CD8-positive, alpha-beta T cell (primary cell): ENCODE measurements at regions of chr7 and their contacts with region 1.

Region 1: GRCh38 chr7:112550468-112551060 is 69.8 kb downstream of the LSMEM1 start:
- DNase-seq: peak in 4 of 9 experiments; percentile 6 to 72 (median 38)
- ATAC-seq: peak; percentile 49
- H3K4me3 ChIP-seq: no peak overlapping the region
- H3K4me3 Mint-ChIP-seq: no peak overlapping the region
- H3K27ac ChIP-seq: no peak overlapping the region
- H3K27ac Mint-ChIP-seq: no peak overlapping the region
- H3K4me1 ChIP-seq: no peaks in the 10 kb centered on the region
- H3K4me1 Mint-ChIP-seq: no peaks in the 10 kb centered on the region
- H3K27me3 ChIP-seq: no peaks in the 10 kb centered on the region
- H3K27me3 Mint-ChIP-seq: peaks cover 8% of the 10 kb centered on the region
- CTCF ChIP-seq: peak; percentile 94

Region 2: GRCh38 chr7:112869111-112869757 is 318.7 kb after region 1 on chr7:
- CTCF ChIA-PET with region 1: interaction called, 6 read pairs
- POLR2A ChIA-PET with region 1: no interaction called
- intact Hi-C with region 1: loop called (anchors 1 kb)
- DNase-seq: peak in 8 of 9 experiments; percentile 10 to 69 (median 47)
- ATAC-seq: peak; percentile 79
- H3K4me3 ChIP-seq: no peak overlapping the region
- H3K4me3 Mint-ChIP-seq: no peak overlapping the region
- H3K27ac ChIP-seq: no peak overlapping the region
- H3K27ac Mint-ChIP-seq: no peak overlapping the region
- H3K4me1 ChIP-seq: no peaks in the 10 kb centered on the region
- H3K4me1 Mint-ChIP-seq: peaks cover 47% of the 10 kb centered on the region
- H3K27me3 ChIP-seq: no peaks in the 10 kb centered on the region
- H3K27me3 Mint-ChIP-seq: no peaks in the 10 kb centered on the region
- CTCF ChIP-seq: peak; percentile 87

Region 3: DNA sequence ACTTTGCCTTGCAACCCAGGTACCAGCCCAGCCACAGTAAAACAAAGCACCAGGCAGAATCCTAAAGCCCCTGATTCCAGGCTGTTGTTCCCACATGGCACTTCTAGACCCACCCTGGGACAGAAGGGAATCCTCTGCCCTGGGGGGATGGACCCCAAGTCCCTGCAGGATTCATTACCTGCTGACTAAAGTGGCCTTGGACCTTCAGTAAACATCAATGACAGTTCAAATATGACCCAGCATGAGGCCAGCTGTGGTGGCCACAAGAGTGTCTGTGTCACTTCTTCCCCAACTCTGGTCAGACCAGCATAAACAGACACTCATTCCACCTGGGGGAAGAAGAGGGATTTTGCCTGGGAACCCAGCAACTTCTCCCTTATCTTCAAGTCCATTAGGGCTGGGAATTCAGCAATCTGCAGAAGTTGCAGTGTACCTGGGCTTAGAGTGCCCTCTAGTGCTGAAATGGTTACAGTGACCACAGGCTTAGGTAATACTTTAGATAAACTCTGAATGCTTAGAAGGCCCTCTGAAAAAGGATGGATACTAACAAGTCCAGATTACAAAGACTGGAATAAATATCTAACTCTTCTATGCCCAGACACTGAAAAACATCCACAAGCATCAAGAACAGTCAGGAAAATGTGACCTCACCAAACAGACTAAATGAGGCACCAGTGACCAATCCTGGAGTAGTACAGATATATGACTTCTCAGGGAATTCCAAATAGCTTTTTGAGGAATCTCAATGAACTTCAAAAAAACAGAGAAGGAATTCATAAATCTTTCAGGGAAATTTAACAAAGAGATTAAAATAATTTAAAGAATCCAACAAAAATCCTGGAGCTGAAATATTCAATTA is 348.1 kb after region 1 on chr7:
- CTCF ChIA-PET with region 1: interaction called, 10 read pairs
- POLR2A ChIA-PET with region 1: no interaction called
- intact Hi-C with region 1: loop called in 1 of 2 experiments (anchors 1 kb)
- DNase-seq: peak in 4 of 9 experiments; percentile 22 to 62 (median 39)
- ATAC-seq: peak; percentile 42
- H3K4me3 ChIP-seq: no peak overlapping the region
- H3K4me3 Mint-ChIP-seq: no peak overlapping the region
- H3K27ac ChIP-seq: no peak overlapping the region
- H3K27ac Mint-ChIP-seq: no peak overlapping the region
- H3K4me1 ChIP-seq: no peaks in the 10 kb centered on the region
- H3K4me1 Mint-ChIP-seq: peaks cover 12% of the 10 kb centered on the region
- H3K27me3 ChIP-seq: no peaks in the 10 kb centered on the region
- H3K27me3 Mint-ChIP-seq: no peaks in the 10 kb centered on the region
- CTCF ChIP-seq: peak; percentile 57

Region 4: GRCh38 chr7:113421696-113422330 is 871.2 kb after region 1 on chr7:
- CTCF ChIA-PET with region 1: interaction called, 30 read pairs
- POLR2A ChIA-PET with region 1: no interaction called
- intact Hi-C with region 1: loop called in 1 of 2 experiments (anchors 1 kb)
- DNase-seq: peak; percentile 37 to 81 (median 70)
- ATAC-seq: peak; percentile 94
- H3K4me3 ChIP-seq: no peak overlapping the region
- H3K4me3 Mint-ChIP-seq: no peak overlapping the region
- H3K27ac ChIP-seq: no peak overlapping the region
- H3K27ac Mint-ChIP-seq: no peak overlapping the region
- H3K4me1 ChIP-seq: no peaks in the 10 kb centered on the region
- H3K4me1 Mint-ChIP-seq: peaks cover 3% of the 10 kb centered on the region
- H3K27me3 ChIP-seq: no peaks in the 10 kb centered on the region
- H3K27me3 Mint-ChIP-seq: peaks cover under 1% of the 10 kb centered on the region
- CTCF ChIP-seq: peak; percentile 89

Region 5: DNA sequence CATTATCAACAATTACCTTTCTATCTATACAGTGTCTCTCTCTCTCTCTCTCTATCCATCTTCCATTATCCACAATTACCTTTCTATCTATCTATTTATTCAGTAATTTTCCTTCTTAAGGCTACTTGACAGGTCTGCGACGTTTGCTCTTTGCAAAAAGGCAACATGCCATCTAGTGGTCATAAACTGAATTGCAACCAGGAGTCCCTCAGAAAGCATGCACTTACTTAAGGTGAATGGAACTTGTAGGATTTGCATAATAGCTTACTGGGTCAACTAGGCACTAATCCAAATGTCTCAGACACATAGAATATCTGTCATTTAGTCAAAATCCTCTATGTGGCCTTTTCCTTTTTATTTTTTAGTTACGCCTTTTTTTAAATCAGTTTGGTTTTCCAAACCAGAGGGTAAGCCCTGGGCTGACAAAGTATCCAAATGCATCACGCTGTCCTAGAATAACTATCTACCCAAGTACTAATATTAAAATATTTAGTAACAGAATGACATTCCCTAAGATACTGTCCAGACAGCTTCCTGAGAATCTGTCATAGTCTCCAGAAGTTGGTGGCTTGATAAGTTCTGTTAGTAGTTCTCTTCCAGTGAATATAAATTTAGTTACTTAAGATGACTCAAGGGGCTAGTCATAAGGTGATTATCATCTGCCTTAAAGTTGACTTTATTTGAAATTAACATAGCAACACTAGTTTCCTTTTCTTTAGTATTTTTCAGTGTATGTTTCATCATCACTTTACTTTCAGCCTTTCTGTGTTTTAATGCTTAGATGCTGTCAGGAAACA is 1159.9 kb after region 1 on chr7:
- CTCF ChIA-PET with region 1: no interaction called
- POLR2A ChIA-PET with region 1: no interaction called
- intact Hi-C with region 1: loop called in 1 of 2 experiments (anchors 1 kb)
- DNase-seq: peak in 5 of 9 experiments; percentile 5 to 68 (median 40)
- ATAC-seq: peak; percentile 65
- H3K4me3 ChIP-seq: no peak overlapping the region
- H3K4me3 Mint-ChIP-seq: no peak overlapping the region
- H3K27ac ChIP-seq: no peak overlapping the region
- H3K27ac Mint-ChIP-seq: no peak overlapping the region
- H3K4me1 ChIP-seq: no peaks in the 10 kb centered on the region
- H3K4me1 Mint-ChIP-seq: no peaks in the 10 kb centered on the region
- H3K27me3 ChIP-seq: no peaks in the 10 kb centered on the region
- H3K27me3 Mint-ChIP-seq: no peaks in the 10 kb centered on the region
- CTCF ChIP-seq: peak; percentile 99